Psoas muscle (tissue), 8 donors: ENCODE measurements at regions of chr11 and their contacts with region 1.

Region 1: DNA sequence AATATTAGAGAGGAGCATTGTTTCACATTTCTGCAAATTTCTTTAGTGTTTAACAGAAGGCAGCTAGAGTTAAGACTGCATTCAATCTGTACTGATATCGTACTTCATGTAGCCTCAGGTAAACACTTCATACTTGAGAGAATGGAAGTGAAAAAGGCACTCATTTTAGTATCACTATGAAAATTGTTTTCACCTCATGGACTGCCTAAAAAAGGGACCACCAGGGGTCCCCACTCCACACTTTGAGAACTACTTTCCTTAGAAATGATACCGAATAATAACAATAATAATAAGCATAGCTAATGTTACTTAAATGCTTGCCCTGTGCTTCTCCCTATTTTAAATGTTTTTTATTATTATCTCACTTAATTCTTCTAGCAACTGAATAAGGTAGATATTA is 95.1 kb downstream of the BLID start:
- DNase-seq: no peak
- ATAC-seq: no peak
- H3K4me3 ChIP-seq: no peak overlapping the region
- H3K27ac ChIP-seq: no peak overlapping the region
- H3K4me1 ChIP-seq: no peaks in the 10 kb centered on the region
- H3K27me3 ChIP-seq: no peaks in the 10 kb centered on the region
- CTCF ChIP-seq: peak; percentile 45

Region 2: DNA sequence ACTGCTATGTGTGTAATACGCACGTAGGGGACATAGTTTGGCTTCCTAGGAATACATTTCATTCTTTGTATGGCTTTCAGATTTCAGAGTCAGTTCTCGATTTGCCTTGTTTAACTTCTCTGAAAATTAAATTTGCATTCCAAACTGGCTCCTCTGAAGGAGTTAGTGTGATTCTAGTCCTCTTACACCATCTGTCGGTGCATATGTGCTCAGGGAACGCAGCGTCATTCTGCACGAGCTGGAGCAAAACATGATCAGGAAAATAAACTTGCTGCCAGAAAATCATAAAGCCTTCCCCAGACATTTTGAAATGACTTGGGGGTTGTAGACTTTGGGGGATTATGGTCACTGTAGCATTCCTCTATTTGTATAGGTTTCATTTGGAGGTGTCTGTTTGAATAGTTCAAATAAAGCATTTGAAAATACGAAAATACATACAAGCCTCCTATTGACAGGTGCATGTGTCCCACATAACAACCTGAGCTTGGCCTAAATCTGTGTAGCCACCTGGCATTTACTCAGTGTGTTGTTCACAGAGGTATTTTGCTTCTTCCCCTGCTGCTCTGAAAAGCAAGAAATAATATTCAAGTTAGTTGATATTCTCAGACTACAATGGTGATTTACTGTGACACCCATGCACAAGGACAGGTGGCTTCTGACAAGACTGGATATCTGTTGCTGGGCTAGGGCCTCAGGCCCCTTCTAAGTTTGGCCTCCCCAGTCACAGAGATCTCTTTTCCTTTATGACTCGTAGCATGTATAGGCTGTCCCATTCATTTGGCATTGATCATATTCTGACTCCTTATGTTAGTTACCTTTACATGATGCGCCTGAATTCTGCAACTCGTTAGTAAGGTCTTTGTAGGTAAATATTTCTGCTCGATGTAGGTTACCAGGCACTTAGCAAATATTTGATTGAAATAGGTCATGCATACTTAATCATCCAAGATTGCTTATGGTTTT is 486.5 kb before region 1 on chr11:
- intact Hi-C with region 1: no loop called
- DNase-seq: no peak
- ATAC-seq: peak; percentile 57 to 81 (median 67)
- H3K4me3 ChIP-seq: no peak overlapping the region
- H3K27ac ChIP-seq: no peak overlapping the region
- H3K4me1 ChIP-seq: no peaks in the 10 kb centered on the region
- H3K27me3 ChIP-seq: no peaks in the 10 kb centered on the region
- CTCF ChIP-seq: peak; percentile 40

Region 3: DNA sequence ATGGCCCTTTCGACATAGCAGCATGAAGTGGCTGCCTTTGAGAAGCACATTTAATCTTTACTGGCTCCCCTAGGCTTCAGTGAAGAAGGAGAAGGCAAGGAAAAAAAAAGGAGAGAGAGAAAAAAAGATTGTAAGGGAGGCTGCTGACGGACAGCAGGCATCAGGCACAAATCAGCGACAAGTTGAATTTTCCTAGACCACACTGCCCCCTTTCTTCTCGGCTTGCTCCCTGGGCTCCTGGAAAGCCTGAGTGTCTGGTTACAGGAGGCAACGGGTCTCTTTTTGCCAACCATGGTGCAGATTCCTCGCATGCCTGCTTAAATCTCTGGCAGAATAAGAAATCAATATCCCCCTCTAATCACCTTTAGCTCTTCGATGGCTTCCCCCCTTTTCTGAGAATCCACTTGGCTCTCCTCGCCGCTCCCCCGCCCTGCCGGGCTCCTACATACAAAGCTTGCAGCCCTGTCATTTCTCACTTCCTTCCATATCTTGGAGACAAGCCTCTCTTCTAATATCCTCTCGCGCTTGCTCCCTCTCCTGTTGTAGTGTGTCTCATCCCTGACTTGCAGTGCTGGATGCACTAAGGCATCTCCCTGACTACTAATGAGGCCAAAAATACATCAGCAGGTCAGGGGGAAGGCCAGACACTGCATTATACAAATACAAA is 80.9 kb after region 1 on chr11:
- intact Hi-C with region 1: loop called in 1 of 2 experiments (anchors 5 kb)
- DNase-seq: peak; percentile 49 to 67
- ATAC-seq: peak; percentile 78 to 87 (median 86)
- H3K4me3 ChIP-seq: peak overlapping the region; percentile 76
- H3K27ac ChIP-seq: peak overlapping the region; percentile 90
- H3K4me1 ChIP-seq: peaks cover 11% of the 10 kb centered on the region
- H3K27me3 ChIP-seq: peaks cover 0 to 6% (median 0%) of the 10 kb centered on the region in 3 donors
- CTCF ChIP-seq: peak; percentile 61